Colonic mucosa (tissue), 4 donors: ENCODE measurements at regions of chr14 and their contacts with region 1.

Region 1: GRCh38 chr14:24332268-24332993 is 2.4 kb downstream of the ADCY4 start:
- DNase-seq: peak; percentile 88
- H3K4me3 ChIP-seq: peak overlapping the region; percentile 22
- H3K27ac ChIP-seq: no peak overlapping the region
- H3K4me1 ChIP-seq: peaks cover 15% of the 10 kb centered on the region
- H3K27me3 ChIP-seq: peaks cover 10% of the 10 kb centered on the region
- CTCF ChIP-seq: peak; percentile 83

Region 2: DNA sequence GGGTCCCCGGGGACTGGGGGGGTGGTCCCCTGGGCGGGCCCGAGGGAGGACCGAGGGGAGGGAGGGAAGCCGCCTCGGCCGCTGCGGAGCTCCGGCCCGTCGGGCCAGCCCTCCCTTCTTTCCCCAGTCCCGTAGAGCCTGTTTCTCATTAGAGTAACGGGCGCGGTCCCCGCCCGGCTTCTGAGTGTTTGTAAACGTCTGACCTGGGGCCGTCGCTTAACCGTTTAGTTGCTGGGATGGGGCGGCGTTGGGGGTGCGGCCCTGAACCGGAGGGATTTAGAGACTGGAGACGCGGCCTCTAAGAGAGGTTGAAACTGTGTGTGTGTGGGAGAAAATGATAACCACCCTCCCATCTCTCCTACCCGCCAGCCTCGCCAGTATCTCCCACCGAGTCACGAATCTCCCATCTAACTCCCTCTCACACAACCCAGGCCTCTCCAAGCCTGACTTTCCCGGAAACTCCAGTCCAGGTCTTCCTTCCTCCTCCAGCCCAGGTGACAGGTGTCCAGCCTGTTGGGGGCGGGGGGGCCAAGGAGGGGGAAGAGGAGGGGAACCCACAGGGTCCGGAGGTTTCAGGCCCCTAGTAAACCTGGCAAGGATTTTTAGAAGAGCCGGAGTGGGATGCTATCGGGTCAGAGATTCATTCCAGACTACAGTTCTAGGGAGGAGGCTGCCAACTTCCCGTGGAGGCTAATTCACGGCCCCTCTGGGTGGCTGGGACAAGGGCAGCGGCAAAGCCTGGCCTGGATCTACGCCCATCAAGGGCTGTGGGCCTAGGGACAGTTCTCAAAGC is 34.5 kb after region 1 on chr14:
- intact Hi-C with region 1: loop called (anchors 5 kb)
- DNase-seq: peak; percentile 97
- H3K4me3 ChIP-seq: peak overlapping the region; percentile 42
- H3K27ac ChIP-seq: peak overlapping the region; percentile 72
- H3K4me1 ChIP-seq: peaks cover 9% of the 10 kb centered on the region
- H3K27me3 ChIP-seq: no peaks in the 10 kb centered on the region
- CTCF ChIP-seq: no peak

Region 3: DNA sequence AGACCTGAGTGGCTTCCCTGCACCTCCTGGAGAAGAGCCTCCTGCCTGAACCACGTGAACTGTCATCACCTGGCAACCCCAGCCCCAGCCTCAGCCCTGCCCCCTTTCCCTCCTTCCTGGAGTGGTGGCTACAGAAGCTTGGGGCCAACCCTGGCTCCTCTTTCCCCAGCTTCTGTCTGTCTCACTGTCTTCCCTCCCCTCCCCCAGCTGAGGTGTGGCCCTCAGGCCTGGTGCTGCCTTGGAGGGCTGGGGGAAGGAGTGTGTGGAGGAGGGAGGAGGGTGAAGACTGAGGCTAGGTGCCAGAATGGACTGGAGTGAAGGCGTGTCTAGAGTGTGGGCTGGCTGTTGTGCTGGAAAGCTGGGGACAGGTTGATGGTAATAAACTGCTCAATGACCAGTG is 45.2 kb after region 1 on chr14:
- intact Hi-C with region 1: no loop called
- DNase-seq: no peak
- H3K4me3 ChIP-seq: no peak overlapping the region
- H3K27ac ChIP-seq: no peak overlapping the region
- H3K4me1 ChIP-seq: no peaks in the 10 kb centered on the region
- H3K27me3 ChIP-seq: no peaks in the 10 kb centered on the region
- CTCF ChIP-seq: no peak

Region 4: GRCh38 chr14:24411443-24412389 is 79.3 kb after region 1 on chr14:
- intact Hi-C with region 1: no loop called
- DNase-seq: no peak
- H3K4me3 ChIP-seq: no peak overlapping the region
- H3K27ac ChIP-seq: no peak overlapping the region
- H3K4me1 ChIP-seq: no peaks in the 10 kb centered on the region
- H3K27me3 ChIP-seq: no peaks in the 10 kb centered on the region
- CTCF ChIP-seq: peak; percentile 64

Region 5: DNA sequence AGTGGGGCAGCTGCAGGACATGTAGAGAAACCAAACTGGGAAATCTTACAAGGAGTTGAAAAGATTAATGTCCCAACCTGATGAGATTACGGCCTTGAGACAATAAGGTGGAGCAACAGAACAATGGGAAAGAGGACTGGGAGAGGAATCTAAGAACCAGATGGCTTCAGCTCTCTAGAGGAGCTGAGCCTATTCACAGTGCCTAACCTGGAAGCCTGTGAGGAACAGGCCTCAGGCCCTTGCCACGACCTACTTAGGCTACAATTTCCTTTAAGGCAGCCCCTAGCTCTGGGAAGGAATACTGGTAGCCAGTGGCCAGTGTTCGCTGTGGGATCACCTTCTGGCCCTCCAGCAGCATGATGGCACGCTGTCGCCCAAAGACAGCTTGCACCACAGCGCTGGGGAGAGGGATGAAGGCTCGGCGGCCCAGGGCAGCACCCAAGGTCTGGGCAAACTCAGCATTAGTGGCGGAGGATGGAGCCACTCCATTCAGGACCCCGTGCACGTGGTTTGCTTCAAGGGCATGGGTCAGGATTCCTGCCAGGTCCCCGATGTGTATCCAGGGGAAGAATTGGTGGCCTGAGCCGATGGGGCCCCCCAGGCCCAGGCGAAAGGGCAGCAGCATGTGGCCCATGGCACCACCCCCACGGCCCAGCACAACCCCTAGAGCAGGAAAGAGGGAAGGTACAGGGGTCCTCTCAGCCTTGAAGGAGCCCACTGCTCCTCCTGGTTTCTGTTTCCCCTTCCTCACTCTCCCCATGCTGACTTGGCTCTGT is 107.6 kb after region 1 on chr14:
- intact Hi-C with region 1: loop called (anchors 2 kb)
- DNase-seq: no peak
- H3K4me3 ChIP-seq: no peak overlapping the region
- H3K27ac ChIP-seq: no peak overlapping the region
- H3K4me1 ChIP-seq: peaks cover 27% of the 10 kb centered on the region
- H3K27me3 ChIP-seq: no peaks in the 10 kb centered on the region
- CTCF ChIP-seq: no peak